ENCODE measurements at regions of chr12 and their contacts with region 1.

Region 1: GRCh38 chr12:131116391-131117117 is 162.8 kb downstream of the ADGRD1 start:
- DNase-seq: peak; percentile 42
- H3K4me3 Mint-ChIP-seq: no peak overlapping the region
- H3K27ac Mint-ChIP-seq: no peak overlapping the region
- H3K4me1 Mint-ChIP-seq: no peaks in the 10 kb centered on the region
- H3K27me3 Mint-ChIP-seq: peaks cover 87% of the 10 kb centered on the region
- CTCF ChIP-seq: peak; percentile 64

Region 2: GRCh38 chr12:131167334-131167733 is 50.8 kb after region 1 on chr12:
- CTCF ChIA-PET with region 1: interaction called, 17 read pairs
- intact Hi-C with region 1: no loop called
- DNase-seq: no peak
- H3K4me3 Mint-ChIP-seq: no peak overlapping the region
- H3K27ac Mint-ChIP-seq: no peak overlapping the region
- H3K4me1 Mint-ChIP-seq: no peaks in the 10 kb centered on the region
- H3K27me3 Mint-ChIP-seq: peaks cover 44% of the 10 kb centered on the region
- CTCF ChIP-seq: no peak

Region 3: GRCh38 chr12:131189781-131190180 is 73.2 kb after region 1 on chr12:
- CTCF ChIA-PET with region 1: no interaction called
- intact Hi-C with region 1: no loop called
- DNase-seq: no peak
- H3K4me3 Mint-ChIP-seq: no peak overlapping the region
- H3K27ac Mint-ChIP-seq: no peak overlapping the region
- H3K4me1 Mint-ChIP-seq: no peaks in the 10 kb centered on the region
- H3K27me3 Mint-ChIP-seq: peaks cover 34% of the 10 kb centered on the region
- CTCF ChIP-seq: no peak

Measured in Calu3 (cell line).